Activated naive CD4-positive, alpha-beta T cell treated with anti-CD3 and anti-CD28 coated beads for 36 hours (primary cell): ENCODE measurements at regions of chr19 and their contacts with region 1.

Region 1: GRCh38 chr19:48492925-48493717 is 18.5 kb downstream of the LMTK3 start:
- DNase-seq: peak; percentile 86
- H3K4me3 Mint-ChIP-seq: peak overlapping the region; percentile 62
- H3K27ac Mint-ChIP-seq: no peak overlapping the region
- H3K4me1 Mint-ChIP-seq: peaks cover 31% of the 10 kb centered on the region
- H3K27me3 Mint-ChIP-seq: peaks cover 38% of the 10 kb centered on the region

Region 2: DNA sequence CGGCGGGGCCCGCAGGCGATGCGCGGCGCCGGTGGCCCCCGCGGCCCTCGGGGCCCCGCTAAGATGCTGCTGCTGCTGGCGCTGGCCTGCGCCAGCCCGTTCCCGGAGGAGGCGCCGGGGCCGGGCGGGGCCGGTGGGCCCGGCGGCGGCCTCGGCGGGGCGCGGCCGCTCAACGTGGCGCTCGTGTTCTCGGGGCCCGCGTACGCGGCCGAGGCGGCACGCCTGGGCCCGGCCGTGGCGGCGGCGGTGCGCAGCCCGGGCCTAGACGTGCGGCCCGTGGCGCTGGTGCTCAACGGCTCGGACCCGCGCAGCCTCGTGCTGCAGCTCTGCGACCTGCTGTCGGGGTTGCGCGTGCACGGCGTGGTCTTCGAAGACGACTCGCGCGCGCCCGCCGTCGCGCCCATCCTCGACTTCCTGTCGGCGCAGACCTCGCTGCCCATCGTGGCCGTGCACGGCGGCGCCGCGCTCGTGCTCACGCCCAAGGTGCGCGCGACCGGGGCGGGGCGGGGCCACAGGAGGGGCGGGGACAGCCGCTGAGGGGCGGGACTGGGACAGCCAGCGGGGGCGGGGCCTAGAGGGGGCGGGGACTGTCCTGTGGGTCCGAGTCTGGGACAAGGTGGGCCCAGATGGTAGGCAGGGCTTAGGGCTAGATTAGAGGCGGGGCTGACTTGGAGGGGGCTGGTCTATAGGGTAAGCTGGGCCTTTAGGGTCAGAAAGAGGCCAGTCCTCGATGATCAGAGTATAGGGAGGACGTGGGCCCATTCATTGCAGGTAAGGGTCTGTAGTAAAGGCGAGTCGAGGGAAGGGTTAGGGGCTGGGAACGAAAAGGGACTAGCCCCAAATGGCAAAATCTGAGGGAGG is 94.5 kb before region 1 on chr19:
- CTCF ChIA-PET with region 1: no interaction called
- intact Hi-C with region 1: loop called (anchors 5 kb)
- DNase-seq: peak; percentile 86
- H3K4me3 Mint-ChIP-seq: peak overlapping the region; percentile 48
- H3K27ac Mint-ChIP-seq: no peak overlapping the region
- H3K4me1 Mint-ChIP-seq: peaks cover 41% of the 10 kb centered on the region
- H3K27me3 Mint-ChIP-seq: peaks cover 41% of the 10 kb centered on the region

Region 3: DNA sequence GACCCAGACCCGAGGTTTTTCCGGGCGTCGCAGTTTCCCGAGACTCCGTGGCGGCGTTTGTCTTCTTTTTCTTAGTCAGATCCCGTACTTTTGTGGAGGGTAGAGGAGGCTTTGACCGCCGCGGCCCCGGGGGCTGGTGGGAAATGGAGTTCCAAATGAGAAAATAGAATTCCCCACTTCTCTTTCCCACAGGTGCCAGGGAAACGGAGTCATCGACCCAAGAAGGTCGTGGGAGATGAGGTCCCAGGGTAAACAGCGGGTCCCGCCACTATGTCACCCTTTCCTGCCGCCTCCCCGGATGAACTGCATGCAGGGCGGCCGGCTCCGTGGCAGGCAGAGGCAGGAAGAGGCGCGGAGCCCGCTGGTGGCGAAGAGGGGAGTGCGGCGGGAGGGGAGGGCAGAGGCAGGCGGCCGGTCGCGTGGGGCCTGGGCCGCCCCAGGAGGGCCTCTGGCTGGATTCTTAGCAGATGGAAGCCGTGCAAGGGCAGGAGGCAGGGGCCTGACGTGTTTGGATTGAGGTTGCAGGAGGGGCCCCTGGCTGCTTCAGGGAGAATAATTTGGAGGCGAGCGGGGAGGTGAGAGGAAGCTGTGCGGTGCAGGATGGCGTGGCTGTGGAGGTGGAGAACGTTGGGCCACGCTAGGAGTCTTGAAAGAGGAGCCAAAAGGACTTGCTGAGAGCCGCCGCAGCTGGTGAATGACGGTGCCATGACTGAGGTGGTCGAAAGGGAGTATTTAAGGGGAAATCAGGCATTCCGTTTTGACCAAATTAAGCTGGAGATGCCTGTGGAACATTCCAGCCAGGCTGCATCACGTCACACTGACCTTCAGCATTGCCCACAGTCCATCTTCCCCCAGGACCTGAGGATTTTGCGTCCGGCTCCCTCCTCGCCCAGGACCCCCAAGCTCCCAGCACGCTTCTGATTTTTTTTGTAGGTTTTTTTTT is 12.3 kb before region 1 on chr19:
- CTCF ChIA-PET with region 1: interaction called, 25 read pairs
- intact Hi-C with region 1: no loop called
- DNase-seq: peak; percentile 70
- H3K4me3 Mint-ChIP-seq: peak overlapping the region; percentile 75
- H3K27ac Mint-ChIP-seq: peak overlapping the region; percentile 79
- H3K4me1 Mint-ChIP-seq: peaks cover 19% of the 10 kb centered on the region
- H3K27me3 Mint-ChIP-seq: no peaks in the 10 kb centered on the region

Region 4: GRCh38 chr19:48513289-48514122 is 20.4 kb after region 1 on chr19:
- CTCF ChIA-PET with region 1: interaction called, 7 read pairs
- intact Hi-C with region 1: loop called (anchors 1 kb)
- DNase-seq: peak; percentile 83
- H3K4me3 Mint-ChIP-seq: no peak overlapping the region
- H3K27ac Mint-ChIP-seq: peak overlapping the region; percentile 31
- H3K4me1 Mint-ChIP-seq: peaks cover 16% of the 10 kb centered on the region
- H3K27me3 Mint-ChIP-seq: no peaks in the 10 kb centered on the region

Region 5: DNA sequence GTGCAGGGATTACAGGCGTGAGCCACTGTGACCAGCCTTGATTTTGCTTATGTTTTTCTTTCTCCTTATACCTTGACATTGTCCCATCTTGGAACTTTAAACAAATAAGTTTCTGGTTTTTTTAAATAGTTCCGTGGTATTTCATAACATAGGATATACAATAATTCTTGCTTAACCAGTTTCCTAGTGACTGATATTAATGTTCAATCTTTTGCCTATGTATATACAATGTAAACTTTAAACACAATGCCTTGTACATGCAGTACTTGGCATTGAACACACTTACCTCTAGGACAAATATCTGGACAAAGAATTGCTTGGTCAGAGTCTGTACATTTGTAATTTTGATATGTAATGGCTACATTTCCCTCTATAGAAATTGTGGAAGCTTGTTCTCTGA is 89.0 kb after region 1 on chr19:
- CTCF ChIA-PET with region 1: interaction called, 62 read pairs
- intact Hi-C with region 1: loop called (anchors 1 kb)
- DNase-seq: no peak
- H3K4me3 Mint-ChIP-seq: no peak overlapping the region
- H3K27ac Mint-ChIP-seq: no peak overlapping the region
- H3K4me1 Mint-ChIP-seq: peaks cover 3% of the 10 kb centered on the region
- H3K27me3 Mint-ChIP-seq: peaks cover 4% of the 10 kb centered on the region

Region 6: GRCh38 chr19:48608798-48609263 is 115.7 kb after region 1 on chr19:
- CTCF ChIA-PET with region 1: interaction called, 7 read pairs
- intact Hi-C with region 1: loop called (anchors 1 kb)
- DNase-seq: peak; percentile 64
- H3K4me3 Mint-ChIP-seq: no peak overlapping the region
- H3K27ac Mint-ChIP-seq: no peak overlapping the region
- H3K4me1 Mint-ChIP-seq: peaks cover 2% of the 10 kb centered on the region
- H3K27me3 Mint-ChIP-seq: no peaks in the 10 kb centered on the region

Region 7: DNA sequence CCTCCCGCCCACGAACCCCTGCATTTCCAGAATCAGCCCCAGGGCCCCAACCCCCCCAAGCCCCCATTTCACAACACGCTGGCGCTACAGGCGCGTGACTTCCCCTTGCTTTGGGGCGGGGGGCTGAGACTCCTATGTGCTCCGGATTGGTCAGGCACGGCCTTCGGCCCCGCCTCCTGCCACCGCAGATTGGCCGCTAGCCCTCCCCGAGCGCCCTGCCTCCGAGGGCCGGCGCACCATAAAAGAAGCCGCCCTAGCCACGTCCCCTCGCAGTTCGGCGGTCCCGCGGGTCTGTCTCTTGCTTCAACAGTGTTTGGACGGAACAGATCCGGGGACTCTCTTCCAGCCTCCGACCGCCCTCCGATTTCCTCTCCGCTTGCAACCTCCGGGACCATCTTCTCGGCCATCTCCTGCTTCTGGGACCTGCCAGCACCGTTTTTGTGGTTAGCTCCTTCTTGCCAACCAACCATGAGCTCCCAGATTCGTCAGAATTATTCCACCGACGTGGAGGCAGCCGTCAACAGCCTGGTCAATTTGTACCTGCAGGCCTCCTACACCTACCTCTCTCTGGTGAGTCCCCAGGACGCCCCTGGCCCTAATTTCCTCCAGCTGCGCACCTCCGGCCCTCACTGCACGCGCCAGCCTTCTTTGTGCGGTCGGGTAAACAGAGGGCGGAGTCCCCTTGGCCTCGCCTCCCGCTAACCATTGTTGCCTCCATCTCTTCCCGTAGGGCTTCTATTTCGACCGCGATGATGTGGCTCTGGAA is 472.1 kb after region 1 on chr19 and contains the start of gene FTL:
- CTCF ChIA-PET with region 1: no interaction called
- intact Hi-C with region 1: no loop called
- DNase-seq: peak; percentile 93
- H3K4me3 Mint-ChIP-seq: peak within 1 kb of the TSS; percentile 100
- H3K27ac Mint-ChIP-seq: peak within 1 kb of the TSS; percentile 97
- H3K4me1 Mint-ChIP-seq: peaks cover 56% of the 10 kb centered on the region
- H3K27me3 Mint-ChIP-seq: no peaks in the 10 kb centered on the region
- total RNA-seq, gene FTL: 1,093 to 1,120 TPM